Activated CD8-positive, alpha-beta T cell treated with anti-CD3 and anti-CD28 coated beads, Interleukin-2, amount 10 ng/mL, durations not matched to agents 7 days and 5 days (primary cell): ENCODE measurements at regions of chr12 and their contacts with region 1.

Region 1: GRCh38 chr12:389139-390096 is at the start of gene KDM5A:
- DNase-seq: peak; percentile 94
- ATAC-seq: peak; percentile 92
- H3K4me3 Mint-ChIP-seq: peak within 1 kb of the TSS; percentile 89
- H3K27ac Mint-ChIP-seq: peak within 1 kb of the TSS; percentile 98
- H3K4me1 Mint-ChIP-seq: peaks cover 33% of the 10 kb centered on the region
- H3K27me3 Mint-ChIP-seq: no peaks in the 10 kb centered on the region
- total RNA-seq, gene KDM5A: 81.5 to 87.7 TPM

Region 2: GRCh38 chr12:401235-402028 is 12.0 kb after region 1 on chr12 and contains the start of gene CCDC77:
- CTCF ChIA-PET with region 1: interaction called, 36 read pairs
- POLR2A ChIA-PET with region 1: interaction called, 40 read pairs
- DNase-seq: peak; percentile 96
- ATAC-seq: peak; percentile 100
- H3K4me3 Mint-ChIP-seq: no peak within 1 kb of the TSS
- H3K27ac Mint-ChIP-seq: no peak within 1 kb of the TSS
- H3K4me1 Mint-ChIP-seq: no peaks in the 10 kb centered on the region
- H3K27me3 Mint-ChIP-seq: no peaks in the 10 kb centered on the region
- total RNA-seq, gene CCDC77: 16.8 to 18.9 TPM